H1 (cell line): ENCODE measurements at regions of chr2 and their contacts with region 1.

Region 1: DNA sequence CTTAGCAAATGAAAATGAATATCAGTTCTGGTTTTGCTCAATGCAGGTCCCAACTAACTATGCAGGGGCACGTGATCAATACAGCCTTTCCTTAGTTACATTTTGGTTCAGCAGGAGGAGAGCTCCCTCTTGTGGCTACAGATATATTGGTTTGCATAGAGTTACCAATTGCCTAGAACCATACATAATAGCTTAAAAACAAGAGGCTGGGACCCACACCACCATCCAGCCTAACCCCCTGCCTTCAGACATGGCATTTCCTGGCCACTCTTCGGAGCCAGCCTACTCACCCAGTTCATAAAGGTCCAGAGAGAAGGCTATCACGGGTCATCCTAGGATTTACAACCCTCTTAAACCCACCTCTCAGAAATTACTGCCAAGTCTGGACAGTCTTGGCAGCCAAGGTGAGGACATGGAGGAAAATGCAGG is 10.5 kb downstream of the CCDC93 start:
- DNase-seq: peak in 1 of 2 experiments; percentile 55
- H3K4me3 ChIP-seq: no peak overlapping the region
- H3K27ac ChIP-seq: no peak overlapping the region
- H3K4me1 ChIP-seq: 0 out of 7 replicates have a peak, but pooled peaks cover 0 to 2% (median 0%) of the 10 kb centered on the region in 4 experiments
- H3K27me3 ChIP-seq: no peaks in the 10 kb centered on the region
- CTCF ChIP-seq: peak in 2 of 3 experiments; percentile 63 to 82; a peak in 3 of 4 replicates
- EP300 ChIP-seq: no peak
- POLR2A ChIP-seq: no peak
- RAD21 ChIP-seq: peak; percentile 83 to 85

Region 2: GRCh38 chr2:117814417-117815264 is 188.8 kb before region 1 on chr2 and contains the start of gene DDX18:
- CTCF ChIA-PET with region 1: interaction called, 12 read pairs
- POLR2A ChIA-PET with region 1: interaction called, 3 read pairs
- DNase-seq: peak; percentile 89 to 94
- H3K4me3 ChIP-seq: peak within 1 kb of the TSS; percentile 85 to 99 (median 94)
- H3K27ac ChIP-seq: peak within 1 kb of the TSS; percentile 72
- H3K4me1 ChIP-seq: peaks cover 0 to 8% (median 5%) of the 10 kb centered on the region in 4 experiments; a peak in 3 of 7 replicates
- H3K27me3 ChIP-seq: no peaks in the 10 kb centered on the region
- CTCF ChIP-seq: peak; percentile 82 to 100 (median 100)
- EP300 ChIP-seq: peak in 1 of 2 experiments; percentile 81; a peak in 1 of 3 replicates
- POLR2A ChIP-seq: peak; percentile 33 to 80
- RAD21 ChIP-seq: peak; percentile 53 to 66; a peak in 3 of 4 replicates
- total RNA-seq, gene DDX18: 111 and 119 TPM in 2 replicates

Region 3: GRCh38 chr2:117888897-117889296 is 114.5 kb before region 1 on chr2:
- CTCF ChIA-PET with region 1: no interaction called
- POLR2A ChIA-PET with region 1: no interaction called
- DNase-seq: no peak
- H3K4me3 ChIP-seq: no peak overlapping the region
- H3K27ac ChIP-seq: no peak overlapping the region
- H3K4me1 ChIP-seq: no peaks in the 10 kb centered on the region
- H3K27me3 ChIP-seq: no peaks in the 10 kb centered on the region
- CTCF ChIP-seq: no peak
- EP300 ChIP-seq: no peak
- POLR2A ChIP-seq: no peak
- RAD21 ChIP-seq: no peak

Region 4: DNA sequence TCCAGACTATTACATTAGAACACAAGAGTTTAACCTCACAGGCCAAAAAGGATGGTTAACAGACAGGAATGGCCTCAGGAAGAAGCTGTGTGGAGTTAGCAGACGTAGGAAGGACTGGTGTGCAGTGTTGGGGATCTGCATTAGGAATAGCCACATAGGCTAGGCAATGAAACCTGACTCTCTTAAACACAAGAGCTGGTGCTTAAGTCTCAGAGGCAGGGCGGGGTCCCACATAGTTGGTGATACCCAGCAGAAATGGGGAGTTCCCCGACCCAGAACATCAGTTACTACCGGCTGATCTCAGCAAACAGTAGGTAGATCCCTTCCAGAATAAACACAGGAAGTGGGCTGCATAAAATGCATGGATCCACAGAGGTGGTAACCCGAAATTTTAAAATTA is 53.6 kb before region 1 on chr2:
- CTCF ChIA-PET with region 1: interaction called, 26 read pairs
- POLR2A ChIA-PET with region 1: no interaction called
- DNase-seq: no peak
- H3K4me3 ChIP-seq: no peak overlapping the region
- H3K27ac ChIP-seq: no peak overlapping the region
- H3K4me1 ChIP-seq: no peaks in the 10 kb centered on the region
- H3K27me3 ChIP-seq: no peaks in the 10 kb centered on the region
- CTCF ChIP-seq: no peak
- EP300 ChIP-seq: no peak
- POLR2A ChIP-seq: no peak
- RAD21 ChIP-seq: no peak

Region 5: DNA sequence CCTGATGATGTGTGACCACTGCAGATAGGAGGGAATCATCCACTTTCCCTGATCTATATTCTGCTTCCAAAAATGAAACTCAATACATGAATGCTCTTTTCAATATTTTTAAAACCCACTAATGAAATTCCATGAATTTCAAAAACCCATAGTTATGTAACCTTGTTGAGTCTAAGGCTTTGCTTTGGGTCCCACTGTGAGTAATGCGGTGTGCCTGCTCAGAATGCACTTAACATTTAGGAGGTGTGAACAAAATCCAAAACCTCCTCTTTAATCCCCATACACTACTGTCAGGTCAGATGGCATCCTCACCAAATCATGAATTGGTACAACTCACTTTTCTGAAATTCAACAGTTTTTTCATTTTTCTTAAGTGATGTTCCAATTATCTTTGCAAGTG is 40.0 kb before region 1 on chr2:
- CTCF ChIA-PET with region 1: interaction called, 39 read pairs
- POLR2A ChIA-PET with region 1: no interaction called
- DNase-seq: no peak
- H3K4me3 ChIP-seq: no peak overlapping the region
- H3K27ac ChIP-seq: no peak overlapping the region
- H3K4me1 ChIP-seq: no peaks in the 10 kb centered on the region
- H3K27me3 ChIP-seq: no peaks in the 10 kb centered on the region
- CTCF ChIP-seq: no peak
- EP300 ChIP-seq: no peak
- POLR2A ChIP-seq: no peak
- RAD21 ChIP-seq: no peak

Region 6: GRCh38 chr2:117980783-117981676 is 22.4 kb before region 1 on chr2:
- CTCF ChIA-PET with region 1: interaction called, 98 read pairs
- POLR2A ChIA-PET with region 1: no interaction called
- DNase-seq: no peak
- H3K4me3 ChIP-seq: no peak overlapping the region
- H3K27ac ChIP-seq: no peak overlapping the region
- H3K4me1 ChIP-seq: no peaks in the 10 kb centered on the region; a peak in 1 of 7 replicates
- H3K27me3 ChIP-seq: no peaks in the 10 kb centered on the region
- CTCF ChIP-seq: no peak
- EP300 ChIP-seq: no peak
- POLR2A ChIP-seq: no peak
- RAD21 ChIP-seq: no peak

Region 7: GRCh38 chr2:118061135-118061955 is 57.9 kb after region 1 on chr2:
- CTCF ChIA-PET with region 1: interaction called, 17 read pairs
- POLR2A ChIA-PET with region 1: no interaction called
- DNase-seq: no peak
- H3K4me3 ChIP-seq: no peak overlapping the region
- H3K27ac ChIP-seq: no peak overlapping the region
- H3K4me1 ChIP-seq: no peaks in the 10 kb centered on the region
- H3K27me3 ChIP-seq: peaks cover 0 to 2% (median 0%) of the 10 kb centered on the region in 4 experiments; a peak in 1 of 7 replicates
- CTCF ChIP-seq: peak in 2 of 3 experiments; percentile 52 to 60; a peak in 3 of 4 replicates
- EP300 ChIP-seq: no peak
- POLR2A ChIP-seq: no peak
- RAD21 ChIP-seq: peak; percentile 77 to 80